ENCODE measurements at regions of chr2 and their contacts with region 1.

Region 1: GRCh38 chr2:136207030-136207623 is 89.2 kb upstream of the CXCR4 start:
- DNase-seq: no peak
- H3K4me3 Mint-ChIP-seq: no peak overlapping the region
- H3K27ac Mint-ChIP-seq: no peak overlapping the region
- H3K4me1 Mint-ChIP-seq: peaks cover 6% of the 10 kb centered on the region
- H3K27me3 Mint-ChIP-seq: no peaks in the 10 kb centered on the region

Region 2: DNA sequence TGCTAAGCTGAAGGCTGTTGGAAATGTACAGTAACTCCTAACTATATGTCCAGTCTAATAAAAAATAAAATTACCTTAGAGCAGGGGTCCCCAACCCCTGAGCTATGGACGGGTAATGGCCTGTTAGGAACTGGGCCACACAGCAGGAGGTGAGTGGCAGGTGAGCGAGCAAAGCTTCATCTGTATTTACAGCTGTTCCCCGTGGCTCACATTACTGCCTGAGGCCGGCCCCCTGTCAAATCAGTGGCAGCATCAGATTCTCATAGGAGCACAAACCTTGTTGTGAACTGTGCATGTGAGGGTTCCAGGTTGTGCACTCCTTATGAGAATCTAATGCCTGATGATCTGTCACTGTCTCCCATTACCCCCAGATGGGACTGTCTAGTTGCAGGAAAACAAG is 16.1 kb before region 1 on chr2:
- CTCF ChIA-PET with region 1: no interaction called
- POLR2A ChIA-PET with region 1: no interaction called
- DNase-seq: no peak
- H3K4me3 Mint-ChIP-seq: no peak overlapping the region
- H3K27ac Mint-ChIP-seq: no peak overlapping the region
- H3K4me1 Mint-ChIP-seq: no peaks in the 10 kb centered on the region
- H3K27me3 Mint-ChIP-seq: no peaks in the 10 kb centered on the region

Region 3: DNA sequence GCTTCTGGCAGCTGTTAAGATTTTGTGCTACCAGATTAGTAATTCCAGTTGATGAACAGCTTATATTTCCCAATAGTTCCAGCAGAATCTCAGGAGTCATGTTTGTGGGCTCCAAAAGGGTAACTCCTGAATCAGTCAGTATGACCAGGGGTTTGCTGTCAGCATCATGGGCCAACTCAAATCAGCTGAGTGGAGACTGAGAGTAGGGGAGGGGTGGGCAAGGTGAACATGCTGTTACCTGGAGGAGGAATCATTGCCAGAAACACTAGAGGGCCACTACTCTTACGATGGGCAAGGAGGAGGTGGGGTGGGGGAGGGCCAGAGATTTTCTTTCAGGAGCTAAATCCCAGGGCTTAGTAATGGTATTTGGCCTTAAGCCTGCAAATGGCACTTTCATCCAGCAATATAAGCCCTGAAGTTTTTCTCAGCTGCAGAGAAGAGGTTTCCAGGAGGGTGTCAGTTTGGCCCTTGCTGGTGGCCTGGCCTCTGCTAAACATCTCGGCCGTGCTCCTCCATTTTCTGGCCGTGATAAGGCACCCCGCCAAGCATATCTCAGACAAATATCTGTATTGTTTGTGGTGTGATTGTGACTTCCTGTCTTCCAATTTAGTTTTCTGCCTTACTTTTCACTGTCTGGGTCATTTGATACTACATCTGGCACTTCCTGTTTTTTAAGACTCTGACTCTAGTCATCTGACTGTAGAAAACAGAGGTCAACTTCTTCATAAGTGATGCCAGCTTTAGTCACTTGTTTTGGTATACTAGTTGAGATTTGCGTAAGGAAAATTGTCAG is 31.4 kb after region 1 on chr2:
- CTCF ChIA-PET with region 1: interaction called, 11 read pairs
- POLR2A ChIA-PET with region 1: no interaction called
- DNase-seq: peak; percentile 37
- H3K4me3 Mint-ChIP-seq: peak overlapping the region; percentile 1
- H3K27ac Mint-ChIP-seq: peak overlapping the region; percentile 82
- H3K4me1 Mint-ChIP-seq: peaks cover 50% of the 10 kb centered on the region
- H3K27me3 Mint-ChIP-seq: no peaks in the 10 kb centered on the region

Measured in activated CD4-positive, alpha-beta T cell treated with anti-CD3 and anti-CD28 coated beads, Interleukin-2, amount 10 ng/mL, durations not matched to agents 7 days and 5 days (primary cell).